ENCODE measurements at regions of chr12 and their contacts with region 1.

Region 1: DNA sequence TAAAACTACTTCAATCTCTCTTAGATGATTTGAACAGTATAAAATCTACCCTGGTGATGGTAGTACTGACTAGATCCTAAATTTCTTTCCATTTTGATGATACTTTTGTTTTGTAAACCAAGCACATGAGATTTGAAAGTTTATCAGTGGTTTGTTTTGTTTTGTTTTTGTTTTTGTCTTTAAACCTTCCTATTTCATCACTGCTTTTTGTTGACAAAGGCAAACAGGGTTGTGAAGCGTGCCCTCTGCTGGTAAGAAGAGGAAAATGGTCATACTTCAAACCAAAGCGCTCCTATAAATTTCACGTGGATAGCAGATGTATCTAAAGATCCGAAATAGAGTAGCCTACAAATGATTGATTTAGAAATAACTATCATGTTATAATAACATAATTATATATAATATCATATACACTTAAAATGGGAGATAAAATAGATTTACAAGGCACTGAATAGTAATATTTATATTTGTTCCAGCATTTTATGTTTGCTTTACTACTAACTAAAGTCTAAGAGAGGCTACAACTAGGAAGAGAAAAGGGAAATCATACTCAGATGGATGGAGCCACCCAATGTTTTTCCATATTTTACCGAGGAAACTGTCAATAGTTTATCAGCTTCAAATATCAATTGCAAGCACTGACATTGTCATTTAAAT is 254.0 kb upstream of the USP15 start:
- DNase-seq: peak; percentile 45
- H3K4me3 Mint-ChIP-seq: no peak overlapping the region
- H3K27ac Mint-ChIP-seq: no peak overlapping the region
- H3K4me1 Mint-ChIP-seq: no peaks in the 10 kb centered on the region
- H3K27me3 Mint-ChIP-seq: no peaks in the 10 kb centered on the region
- CTCF ChIP-seq: peak; percentile 42

Region 2: GRCh38 chr12:62123721-62124203 is 117.6 kb after region 1 on chr12:
- CTCF ChIA-PET with region 1: no interaction called
- intact Hi-C with region 1: loop called (anchors 1 kb)
- DNase-seq: peak; percentile 68
- H3K4me3 Mint-ChIP-seq: no peak overlapping the region
- H3K27ac Mint-ChIP-seq: no peak overlapping the region
- H3K4me1 Mint-ChIP-seq: peaks cover 35% of the 10 kb centered on the region
- H3K27me3 Mint-ChIP-seq: no peaks in the 10 kb centered on the region
- CTCF ChIP-seq: no peak

Measured in Calu3 (cell line).